GM12878 (cell line): ENCODE measurements at regions of chr12 and their contacts with region 1.

Region 1: DNA sequence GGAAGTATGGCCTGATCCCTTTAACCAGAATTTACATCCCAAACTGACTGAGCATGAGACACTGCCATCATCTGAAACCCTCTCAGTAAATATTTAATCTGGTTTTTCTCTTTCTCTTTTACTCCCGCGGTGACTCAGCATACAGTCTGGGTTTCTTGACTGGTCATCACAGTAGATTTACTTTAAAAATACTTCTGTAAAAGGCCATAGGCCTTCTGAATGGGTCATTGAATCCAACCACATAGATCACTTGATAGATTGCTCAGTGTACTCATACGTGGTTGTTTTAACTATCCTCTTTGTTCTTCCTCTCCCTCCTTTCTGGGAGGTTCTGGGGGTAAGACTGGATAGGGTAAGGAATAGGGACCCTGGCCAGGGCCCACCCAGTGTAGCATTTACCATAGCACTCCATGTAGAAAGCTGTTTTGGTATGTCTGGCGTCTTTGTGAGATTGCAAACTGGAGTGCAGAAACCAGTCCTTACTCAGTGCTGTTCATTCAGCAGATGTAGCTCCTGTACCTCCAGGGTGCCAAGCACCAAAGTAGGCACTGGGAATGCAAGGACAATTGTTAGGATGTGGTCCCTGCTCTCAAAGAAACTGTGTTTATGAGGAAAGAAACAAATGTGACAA is 165.7 kb downstream of the SRGAP1 start:
- DNase-seq: no peak
- ATAC-seq: peak; percentile 94
- H3K4me3 ChIP-seq: no peak overlapping the region
- H3K27ac ChIP-seq: no peak overlapping the region
- H3K4me1 ChIP-seq: no peaks in the 10 kb centered on the region; the same call in 1 of the 2 replicates
- H3K27me3 ChIP-seq: no peaks in the 10 kb centered on the region
- CTCF ChIP-seq: no peak
- EP300 ChIP-seq: peak in 1 of 2 experiments; percentile 13; a peak in 1 of 4 replicates
- POLR2A ChIP-seq: no peak
- RAD21 ChIP-seq: no peak

Region 2: GRCh38 chr12:63982604-63983295 is 27.4 kb before region 1 on chr12:
- CTCF ChIA-PET with region 1: no interaction called
- POLR2A ChIA-PET with region 1: no interaction called
- RAD21 ChIA-PET with region 1: no interaction called
- SMC1A ChIA-PET with region 1: interaction called, 11 read pairs
- in situ Hi-C with region 1: no loop called
- intact Hi-C with region 1: no loop called
- DNase-seq: no peak
- ATAC-seq: no peak
- H3K4me3 ChIP-seq: no peak overlapping the region
- H3K27ac ChIP-seq: no peak overlapping the region
- H3K4me1 ChIP-seq: no peaks in the 10 kb centered on the region
- H3K27me3 ChIP-seq: no peaks in the 10 kb centered on the region
- CTCF ChIP-seq: no peak
- EP300 ChIP-seq: no peak
- POLR2A ChIP-seq: no peak
- RAD21 ChIP-seq: no peak

Region 3: DNA sequence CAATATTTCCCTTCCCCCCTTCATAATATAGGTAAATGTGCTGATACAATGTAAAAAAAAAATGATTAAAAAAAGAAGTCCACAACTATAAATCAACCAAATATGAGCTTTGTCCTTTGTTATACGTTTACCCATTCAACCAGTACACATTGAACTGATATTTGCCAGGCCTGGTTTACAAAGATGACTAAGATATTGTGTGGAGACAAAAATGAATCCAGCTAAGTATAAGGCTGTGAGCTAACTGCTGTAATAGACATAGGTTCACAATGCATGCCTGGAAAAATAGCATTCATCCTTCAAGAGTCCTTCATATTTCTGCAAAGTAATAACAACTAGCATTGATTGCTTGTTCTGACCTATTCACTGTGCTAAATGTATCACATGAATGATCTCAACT is 373.5 kb after region 1 on chr12:
- CTCF ChIA-PET with region 1: no interaction called
- POLR2A ChIA-PET with region 1: no interaction called
- RAD21 ChIA-PET with region 1: no interaction called
- SMC1A ChIA-PET with region 1: no interaction called
- in situ Hi-C with region 1: no loop called
- intact Hi-C with region 1: no loop called
- DNase-seq: no peak
- ATAC-seq: no peak
- H3K4me3 ChIP-seq: no peak overlapping the region
- H3K27ac ChIP-seq: no peak overlapping the region
- H3K4me1 ChIP-seq: no peaks in the 10 kb centered on the region
- H3K27me3 ChIP-seq: no peaks in the 10 kb centered on the region
- CTCF ChIP-seq: no peak
- EP300 ChIP-seq: no peak
- POLR2A ChIP-seq: no peak
- RAD21 ChIP-seq: no peak